H1 (cell line): ENCODE measurements at regions of chr6 and their contacts with region 1.

Region 1: DNA sequence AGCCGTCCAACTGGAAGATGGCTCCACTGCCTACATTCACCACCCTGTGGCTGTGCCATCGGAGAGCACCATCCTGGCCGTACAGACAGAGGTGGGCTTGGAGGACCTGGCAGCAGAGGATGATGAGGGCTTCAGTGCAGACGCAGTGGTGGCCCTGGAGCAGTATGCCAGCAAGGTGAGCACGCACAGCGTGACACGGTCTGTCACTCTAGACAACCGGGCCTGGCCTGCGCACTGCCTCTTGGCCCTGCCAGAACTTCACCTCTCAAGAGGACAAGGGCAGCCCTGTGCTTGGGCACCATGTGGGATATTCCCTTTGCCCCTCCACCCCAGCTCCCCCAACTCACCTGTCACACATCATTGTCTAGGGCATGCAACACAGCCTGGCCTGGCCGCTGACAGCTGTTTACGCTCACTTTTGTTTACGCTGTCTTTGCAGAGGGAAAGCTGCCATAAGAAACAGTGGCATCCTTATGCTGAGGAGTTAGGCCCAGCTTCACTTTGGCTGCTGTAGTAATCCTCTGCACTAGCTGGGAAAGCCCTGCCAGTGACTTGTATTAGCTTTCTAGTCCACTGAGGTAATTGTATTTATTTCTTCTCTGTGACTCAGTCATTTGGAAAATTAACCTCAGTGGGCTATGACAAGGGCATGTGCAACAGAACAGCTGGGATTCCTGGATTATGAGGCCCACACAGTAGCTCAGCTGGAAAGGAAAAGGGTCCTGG is 9.8 kb upstream of the DEF6 start:
- DNase-seq: no peak
- H3K4me3 ChIP-seq: no peak overlapping the region
- H3K27ac ChIP-seq: no peak overlapping the region
- H3K4me1 ChIP-seq: no peaks in the 10 kb centered on the region
- H3K27me3 ChIP-seq: no peaks in the 10 kb centered on the region
- CTCF ChIP-seq: no peak
- EP300 ChIP-seq: no peak
- POLR2A ChIP-seq: no peak
- RAD21 ChIP-seq: no peak

Region 2: GRCh38 chr6:35327349-35328027 is 39.7 kb after region 1 on chr6:
- CTCF ChIA-PET with region 1: interaction called, 358 read pairs
- POLR2A ChIA-PET with region 1: interaction called, 3 read pairs
- DNase-seq: peak in 1 of 2 experiments; percentile 79
- H3K4me3 ChIP-seq: no peak overlapping the region
- H3K27ac ChIP-seq: no peak overlapping the region
- H3K4me1 ChIP-seq: 0 out of 7 replicates have a peak, but pooled peaks cover 0 to under 1% (median 0%) of the 10 kb centered on the region in 4 experiments
- H3K27me3 ChIP-seq: no peaks in the 10 kb centered on the region
- CTCF ChIP-seq: peak; percentile 51 to 84 (median 74)
- EP300 ChIP-seq: no peak
- POLR2A ChIP-seq: no peak
- RAD21 ChIP-seq: peak; percentile 62 to 76